Natural killer cell (primary cell): ENCODE measurements at regions of chr17 and their contacts with region 1.

Region 1: DNA sequence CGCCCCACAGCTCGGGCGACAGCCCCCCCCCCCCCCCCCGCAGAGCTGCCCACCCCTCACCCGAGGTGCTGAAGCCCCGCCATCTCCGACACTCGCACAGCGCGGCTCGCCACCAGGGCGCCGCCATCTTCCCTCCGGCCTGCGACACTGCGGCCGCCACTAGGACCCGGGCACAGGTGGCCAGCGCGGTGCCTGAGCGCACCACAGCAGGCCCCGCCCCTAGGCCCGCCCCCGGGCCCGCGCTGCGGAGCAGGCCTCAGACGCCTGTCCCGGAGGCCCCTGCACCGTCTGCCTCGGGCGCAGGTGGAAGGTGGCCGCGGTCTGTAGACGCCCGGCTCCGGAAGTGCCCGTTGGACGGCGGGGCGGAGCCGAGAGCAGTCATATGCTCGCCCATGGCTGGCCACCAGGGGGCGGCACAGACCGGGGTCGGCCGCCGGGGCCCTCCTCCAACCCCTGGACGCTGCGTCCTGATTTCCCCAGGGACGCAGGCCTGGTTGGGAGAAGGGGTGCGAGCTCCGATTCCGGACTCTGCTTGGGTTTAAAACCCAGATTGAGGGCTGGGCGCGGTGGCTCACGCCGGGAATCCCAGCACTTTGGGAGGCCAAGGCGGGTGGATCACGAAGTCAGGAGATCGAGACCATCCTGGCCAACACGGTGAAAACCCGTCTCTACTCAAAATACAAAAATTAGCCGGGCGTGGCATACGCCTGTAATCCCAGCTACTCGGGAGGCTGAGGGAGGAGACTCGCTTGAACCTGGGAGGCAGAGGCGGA is at the start of gene MRPL38:
- DNase-seq: peak; percentile 94 to 96
- ATAC-seq: peak; percentile 95 to 99 (median 95)
- H3K4me3 ChIP-seq: peak within 1 kb of the TSS; percentile 60
- H3K4me3 Mint-ChIP-seq: peak within 1 kb of the TSS; percentile 88
- H3K27ac ChIP-seq: peak within 1 kb of the TSS; percentile 87
- H3K27ac Mint-ChIP-seq: peak within 1 kb of the TSS; percentile 77 to 90
- H3K4me1 ChIP-seq: peaks cover 16% of the 10 kb centered on the region
- H3K4me1 Mint-ChIP-seq: peaks cover 0 to 14% of the 10 kb centered on the region in 2 donors
- H3K27me3 ChIP-seq: no peaks in the 10 kb centered on the region
- H3K27me3 Mint-ChIP-seq: no peaks in the 10 kb centered on the region
- CTCF ChIP-seq: peak; percentile 98
- total RNA-seq, gene MRPL38: 68.6 to 110 (median 96.7) TPM

Region 2: DNA sequence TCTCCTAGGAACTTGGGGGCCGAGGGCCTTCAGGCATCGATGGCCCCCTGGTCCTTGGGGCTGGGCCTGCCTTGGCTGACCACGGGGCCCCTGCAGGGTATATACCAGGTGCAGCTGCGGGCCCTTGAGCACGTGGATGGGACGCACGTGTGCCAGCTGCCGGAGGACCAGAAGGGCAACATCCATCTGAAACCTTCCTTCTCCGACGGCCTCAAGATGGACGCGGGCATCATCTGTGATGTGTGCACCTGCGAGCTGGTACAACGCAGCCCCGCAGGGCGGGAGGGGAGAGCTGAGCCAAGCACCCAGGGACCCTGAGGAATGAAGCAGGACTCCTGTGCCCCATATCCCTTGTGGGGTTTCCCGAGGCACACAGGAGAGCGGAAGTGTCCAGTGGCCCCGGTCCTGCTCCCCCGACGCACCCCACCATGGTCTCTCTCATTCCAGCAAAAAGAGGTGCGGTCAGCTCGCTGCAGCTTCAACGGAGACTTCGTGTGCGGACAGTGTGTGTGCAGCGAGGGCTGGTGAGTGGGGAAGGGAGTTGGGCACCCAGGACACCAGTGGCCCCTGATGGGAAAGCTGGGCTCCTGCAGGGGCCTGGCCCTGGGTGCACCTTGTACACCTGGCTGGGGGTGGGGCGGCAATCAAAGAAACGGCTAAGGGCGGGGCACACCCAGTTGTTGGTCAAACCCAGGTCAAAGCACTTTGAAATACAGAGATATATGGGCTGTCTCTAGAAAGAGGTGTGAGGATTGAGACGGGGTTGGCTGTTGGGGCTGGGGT is 173.0 kb before region 1 on chr17:
- intact Hi-C with region 1: no loop called
- DNase-seq: no peak
- ATAC-seq: no peak
- H3K4me3 ChIP-seq: no peak overlapping the region
- H3K4me3 Mint-ChIP-seq: no peak overlapping the region
- H3K27ac ChIP-seq: no peak overlapping the region
- H3K27ac Mint-ChIP-seq: no peak overlapping the region
- H3K4me1 ChIP-seq: peaks cover 3% of the 10 kb centered on the region
- H3K4me1 Mint-ChIP-seq: no peaks in the 10 kb centered on the region
- H3K27me3 ChIP-seq: no peaks in the 10 kb centered on the region
- H3K27me3 Mint-ChIP-seq: no peaks in the 10 kb centered on the region
- CTCF ChIP-seq: no peak

Region 3: GRCh38 chr17:75855310-75856081 is 49.4 kb before region 1 on chr17 and contains the start of gene WBP2:
- intact Hi-C with region 1: loop called (anchors 2 kb)
- DNase-seq: peak; percentile 92 to 100
- ATAC-seq: peak; percentile 91 to 98 (median 91)
- H3K4me3 ChIP-seq: peak within 1 kb of the TSS; percentile 96
- H3K4me3 Mint-ChIP-seq: no peak within 1 kb of the TSS
- H3K27ac ChIP-seq: peak within 1 kb of the TSS; percentile 96
- H3K27ac Mint-ChIP-seq: no peak within 1 kb of the TSS
- H3K4me1 ChIP-seq: peaks cover 43% of the 10 kb centered on the region
- H3K4me1 Mint-ChIP-seq: peaks cover 7 to 27% of the 10 kb centered on the region in 2 donors
- H3K27me3 ChIP-seq: no peaks in the 10 kb centered on the region
- H3K27me3 Mint-ChIP-seq: no peaks in the 10 kb centered on the region
- CTCF ChIP-seq: peak; percentile 24
- total RNA-seq, gene WBP2: 81.1 to 106 (median 95.2) TPM

Region 4: DNA sequence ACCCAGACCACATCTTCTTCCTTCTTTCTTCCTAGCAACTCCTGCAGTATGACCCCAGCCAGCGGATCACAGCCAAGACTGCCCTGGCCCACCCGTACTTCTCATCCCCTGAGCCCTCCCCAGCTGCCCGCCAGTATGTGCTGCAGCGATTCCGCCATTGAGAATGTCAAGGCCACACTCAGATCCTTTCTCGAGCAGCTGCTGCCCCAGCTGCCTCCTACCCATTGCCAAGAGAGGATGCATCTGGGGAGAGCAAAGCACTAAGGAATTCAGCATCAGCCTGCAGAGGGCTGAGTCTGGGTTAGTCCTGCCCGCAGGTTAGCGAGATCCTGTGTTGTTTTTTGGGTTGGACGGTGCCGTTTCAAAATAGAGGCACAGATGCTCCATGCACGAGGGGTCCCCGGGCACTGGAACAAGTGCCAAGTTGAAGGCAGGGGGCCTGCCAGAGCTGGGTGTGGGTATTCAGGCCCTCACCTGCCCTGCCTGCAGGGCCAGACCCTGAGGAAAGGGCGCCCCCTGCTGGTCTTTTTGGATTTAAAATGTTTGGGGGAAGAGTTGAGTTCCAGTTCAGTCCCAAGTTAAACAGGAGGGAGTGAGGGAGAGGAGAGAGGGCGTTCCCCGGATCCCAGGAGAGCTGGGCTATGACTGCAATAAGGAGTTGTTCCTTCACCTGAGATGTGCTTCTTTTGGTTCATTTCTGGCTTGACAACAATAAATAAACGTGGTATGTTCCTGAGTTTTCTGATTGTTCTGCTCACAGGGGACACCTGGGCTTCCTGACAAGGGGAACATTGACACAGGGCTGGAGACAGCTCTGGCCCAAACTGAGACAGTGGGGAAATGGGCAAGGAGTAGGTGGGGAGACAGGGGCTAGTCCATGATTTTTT is 100.6 kb after region 1 on chr17:
- intact Hi-C with region 1: loop called (anchors 1 kb)
- DNase-seq: peak; percentile 60 to 83
- ATAC-seq: peak in 2 of 3 donors; percentile 66
- H3K4me3 ChIP-seq: no peak overlapping the region
- H3K4me3 Mint-ChIP-seq: no peak overlapping the region
- H3K27ac ChIP-seq: no peak overlapping the region
- H3K27ac Mint-ChIP-seq: peak overlapping the region; percentile 7 to 36
- H3K4me1 ChIP-seq: no peaks in the 10 kb centered on the region
- H3K4me1 Mint-ChIP-seq: no peaks in the 10 kb centered on the region
- H3K27me3 ChIP-seq: no peaks in the 10 kb centered on the region
- H3K27me3 Mint-ChIP-seq: no peaks in the 10 kb centered on the region
- CTCF ChIP-seq: peak; percentile 65